ENCODE measurements at regions of chr5 and their contacts with region 1.

Region 1: GRCh38 chr5:147576646-147577535 is 67.0 kb upstream of the DPYSL3 start:
- DNase-seq: peak; percentile 72
- H3K4me3 ChIP-seq: no peak overlapping the region
- H3K27ac ChIP-seq: no peak overlapping the region
- H3K4me1 ChIP-seq: peaks cover 0 to 14% (median 4%) of the 10 kb centered on the region in 4 donors
- H3K27me3 ChIP-seq: no peaks in the 10 kb centered on the region
- CTCF ChIP-seq: peak; percentile 67 to 87 (median 78)
- EP300 ChIP-seq: no peak
- POLR2A ChIP-seq: no peak

Region 2: GRCh38 chr5:147391781-147392180 is 185.1 kb before region 1 on chr5:
- intact Hi-C with region 1: loop called (anchors 5 kb)
- DNase-seq: peak; percentile 78
- H3K4me3 ChIP-seq: no peak overlapping the region
- H3K27ac ChIP-seq: peak overlapping the region in 3 of 4 donors; percentile 34 to 58 (median 49)
- H3K4me1 ChIP-seq: peaks cover 0 to 20% (median 7%) of the 10 kb centered on the region in 4 donors
- H3K27me3 ChIP-seq: no peaks in the 10 kb centered on the region
- CTCF ChIP-seq: peak; percentile 55 to 72 (median 56)
- EP300 ChIP-seq: no peak
- POLR2A ChIP-seq: no peak